Gastrocnemius medialis (tissue), 4 donors: ENCODE measurements at regions of chr5 and their contacts with region 1.

Region 1: DNA sequence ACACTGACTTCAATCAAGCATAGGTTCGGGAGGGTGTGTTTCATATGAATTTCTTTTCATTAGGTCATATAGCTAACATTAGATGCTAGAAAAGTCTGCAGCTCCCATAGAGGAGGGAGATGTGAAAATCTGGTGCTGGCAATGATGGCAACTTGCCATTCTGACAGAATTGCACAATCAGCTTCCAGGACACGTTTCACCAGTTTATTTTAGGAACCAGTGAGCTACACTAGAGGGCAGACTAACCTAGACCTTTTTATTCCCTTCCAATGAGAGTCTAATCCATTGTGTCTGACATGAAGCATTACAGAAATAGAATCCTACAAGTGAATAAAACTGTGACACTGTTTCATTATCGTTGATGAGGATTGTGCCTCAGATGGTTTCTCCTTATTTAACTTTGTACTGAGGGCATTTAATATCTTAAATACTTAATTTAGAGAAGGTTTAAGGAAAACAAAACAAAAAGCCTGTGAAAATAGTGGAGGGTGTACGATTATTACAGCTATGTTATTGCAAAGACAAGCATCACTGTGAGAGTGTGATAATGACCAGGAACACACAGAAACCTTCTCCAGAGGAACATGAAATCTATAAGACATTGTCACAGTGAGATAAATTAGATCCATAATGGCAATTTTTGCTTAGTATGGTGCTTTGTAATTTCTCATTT is 363.3 kb upstream of the RPS23 start:
- DNase-seq: peak; percentile 60 to 68
- ATAC-seq: peak; percentile 99
- H3K4me3 ChIP-seq: no peak overlapping the region
- H3K27ac ChIP-seq: peak overlapping the region in 1 of 4 donors; percentile 57
- H3K4me1 ChIP-seq: peaks cover 12 to 27% of the 10 kb centered on the region in 2 donors
- H3K27me3 ChIP-seq: no peaks in the 10 kb centered on the region
- CTCF ChIP-seq: peak; percentile 37 to 65 (median 64)
- POLR2A ChIP-seq: no peak

Region 2: GRCh38 chr5:82312373-82312856 is 329.1 kb before region 1 on chr5:
- in situ Hi-C with region 1: loop called in 1 of 4 experiments (anchors 25 kb)
- intact Hi-C with region 1: no loop called
- DNase-seq: peak; percentile 22 to 35
- ATAC-seq: peak; percentile 77 to 83
- H3K4me3 ChIP-seq: no peak overlapping the region
- H3K27ac ChIP-seq: no peak overlapping the region
- H3K4me1 ChIP-seq: no peaks in the 10 kb centered on the region
- H3K27me3 ChIP-seq: no peaks in the 10 kb centered on the region
- CTCF ChIP-seq: peak; percentile 50 to 83 (median 70)
- POLR2A ChIP-seq: no peak

Region 3: GRCh38 chr5:82560561-82560960 is 80.9 kb before region 1 on chr5:
- in situ Hi-C with region 1: no loop called
- intact Hi-C with region 1: no loop called
- DNase-seq: no peak
- ATAC-seq: no peak
- H3K4me3 ChIP-seq: no peak overlapping the region
- H3K27ac ChIP-seq: no peak overlapping the region
- H3K4me1 ChIP-seq: no peaks in the 10 kb centered on the region
- H3K27me3 ChIP-seq: no peaks in the 10 kb centered on the region
- CTCF ChIP-seq: no peak
- POLR2A ChIP-seq: no peak

Region 4: DNA sequence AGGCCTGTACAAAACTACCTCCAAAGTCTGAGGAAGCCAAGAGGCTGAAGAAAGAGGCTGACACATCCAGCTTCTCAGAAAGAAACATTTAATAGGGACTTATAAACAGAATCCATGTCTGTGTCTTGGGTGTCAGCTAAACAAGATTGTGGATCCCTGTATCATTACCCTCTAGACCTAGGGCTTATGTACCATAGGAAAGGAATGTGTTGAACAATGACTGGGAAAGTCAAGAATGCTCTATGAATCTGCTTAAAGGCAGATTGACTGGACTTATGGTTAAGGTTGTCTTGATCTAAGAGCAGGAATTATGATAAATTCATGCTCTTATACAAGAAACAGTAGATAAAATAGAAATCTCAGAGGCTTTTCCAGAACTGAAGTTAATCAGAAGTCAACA is 27.6 kb before region 1 on chr5:
- in situ Hi-C with region 1: no loop called
- intact Hi-C with region 1: no loop called
- DNase-seq: no peak
- ATAC-seq: no peak
- H3K4me3 ChIP-seq: no peak overlapping the region
- H3K27ac ChIP-seq: no peak overlapping the region
- H3K4me1 ChIP-seq: no peaks in the 10 kb centered on the region
- H3K27me3 ChIP-seq: no peaks in the 10 kb centered on the region
- CTCF ChIP-seq: no peak
- POLR2A ChIP-seq: no peak

Region 5: DNA sequence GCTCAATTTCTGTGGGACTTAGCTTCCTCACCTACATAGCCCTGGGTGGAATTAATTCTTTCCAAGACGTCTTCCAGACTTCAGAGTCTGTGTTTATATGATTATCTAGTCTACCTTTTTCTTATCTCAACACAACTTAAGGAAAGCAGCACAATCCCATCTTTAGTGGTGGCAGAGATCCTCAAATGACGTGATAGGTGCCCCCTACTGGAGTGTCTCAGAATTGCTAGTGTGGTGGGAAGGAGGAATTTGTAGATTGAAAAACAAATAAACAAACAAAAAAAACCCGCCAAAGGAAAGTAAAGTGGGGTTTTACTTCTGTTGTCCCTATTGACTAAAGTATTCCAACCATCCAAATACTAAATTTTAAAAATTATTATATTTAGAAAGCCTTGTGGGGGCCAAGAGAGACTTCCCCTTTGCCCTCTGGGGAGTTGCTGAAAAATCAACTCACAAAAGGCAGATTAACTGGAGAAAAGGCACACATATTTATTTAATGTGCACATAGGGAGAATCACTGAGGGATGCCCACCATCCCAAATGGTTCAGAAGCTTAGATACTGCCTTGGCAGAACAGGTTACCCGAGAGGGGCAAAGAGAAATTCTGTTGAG is 152.4 kb after region 1 on chr5:
- in situ Hi-C with region 1: no loop called
- intact Hi-C with region 1: loop called (anchors 5 kb)
- DNase-seq: no peak
- ATAC-seq: no peak
- H3K4me3 ChIP-seq: no peak overlapping the region
- H3K27ac ChIP-seq: no peak overlapping the region
- H3K4me1 ChIP-seq: peaks cover 0 to 3% of the 10 kb centered on the region in 2 donors
- H3K27me3 ChIP-seq: no peaks in the 10 kb centered on the region
- CTCF ChIP-seq: peak; percentile 32 to 60 (median 39)
- POLR2A ChIP-seq: no peak

Region 6: GRCh38 chr5:83430130-83431010 is 788.9 kb after region 1 on chr5:
- in situ Hi-C with region 1: loop called in 1 of 4 experiments (anchors 25 kb)
- intact Hi-C with region 1: no loop called
- DNase-seq: no peak
- ATAC-seq: no peak
- H3K4me3 ChIP-seq: no peak overlapping the region
- H3K27ac ChIP-seq: no peak overlapping the region
- H3K4me1 ChIP-seq: no peaks in the 10 kb centered on the region
- H3K27me3 ChIP-seq: no peaks in the 10 kb centered on the region
- CTCF ChIP-seq: peak in 4 of 5 experiments; percentile 19 to 56 (median 47)
- POLR2A ChIP-seq: no peak

Region 7: GRCh38 chr5:83564069-83564749 is 922.7 kb after region 1 on chr5:
- in situ Hi-C with region 1: loop called in 3 of 4 experiments (anchors 10 to 25 kb)
- intact Hi-C with region 1: loop called (anchors 1 kb)
- DNase-seq: no peak
- ATAC-seq: peak; percentile 43 to 44
- H3K4me3 ChIP-seq: no peak overlapping the region
- H3K27ac ChIP-seq: no peak overlapping the region
- H3K4me1 ChIP-seq: no peaks in the 10 kb centered on the region
- H3K27me3 ChIP-seq: no peaks in the 10 kb centered on the region
- CTCF ChIP-seq: peak in 4 of 5 experiments; percentile 42 to 68 (median 54)
- POLR2A ChIP-seq: no peak